CD4-positive, alpha-beta T cell (primary cell): ENCODE measurements at regions of chr14 and their contacts with region 1.

Region 1: GRCh38 chr14:55051426-55052268 is at the start of gene MAPK1IP1L:
- DNase-seq: peak; percentile 83 to 95 (median 90)
- ATAC-seq: peak; percentile 88
- H3K4me3 ChIP-seq: peak within 1 kb of the TSS; percentile 91
- H3K4me3 Mint-ChIP-seq: peak within 1 kb of the TSS; percentile 95
- H3K27ac ChIP-seq: peak within 1 kb of the TSS; percentile 98 to 99
- H3K27ac Mint-ChIP-seq: peak within 1 kb of the TSS; percentile 96
- H3K4me1 ChIP-seq: peaks cover 27% of the 10 kb centered on the region
- H3K4me1 Mint-ChIP-seq: peaks cover 49% of the 10 kb centered on the region
- H3K27me3 ChIP-seq: no peaks in the 10 kb centered on the region
- H3K27me3 Mint-ChIP-seq: no peaks in the 10 kb centered on the region
- CTCF ChIP-seq: peak; percentile 99
- total RNA-seq, gene MAPK1IP1L: 198 to 207 TPM

Region 2: DNA sequence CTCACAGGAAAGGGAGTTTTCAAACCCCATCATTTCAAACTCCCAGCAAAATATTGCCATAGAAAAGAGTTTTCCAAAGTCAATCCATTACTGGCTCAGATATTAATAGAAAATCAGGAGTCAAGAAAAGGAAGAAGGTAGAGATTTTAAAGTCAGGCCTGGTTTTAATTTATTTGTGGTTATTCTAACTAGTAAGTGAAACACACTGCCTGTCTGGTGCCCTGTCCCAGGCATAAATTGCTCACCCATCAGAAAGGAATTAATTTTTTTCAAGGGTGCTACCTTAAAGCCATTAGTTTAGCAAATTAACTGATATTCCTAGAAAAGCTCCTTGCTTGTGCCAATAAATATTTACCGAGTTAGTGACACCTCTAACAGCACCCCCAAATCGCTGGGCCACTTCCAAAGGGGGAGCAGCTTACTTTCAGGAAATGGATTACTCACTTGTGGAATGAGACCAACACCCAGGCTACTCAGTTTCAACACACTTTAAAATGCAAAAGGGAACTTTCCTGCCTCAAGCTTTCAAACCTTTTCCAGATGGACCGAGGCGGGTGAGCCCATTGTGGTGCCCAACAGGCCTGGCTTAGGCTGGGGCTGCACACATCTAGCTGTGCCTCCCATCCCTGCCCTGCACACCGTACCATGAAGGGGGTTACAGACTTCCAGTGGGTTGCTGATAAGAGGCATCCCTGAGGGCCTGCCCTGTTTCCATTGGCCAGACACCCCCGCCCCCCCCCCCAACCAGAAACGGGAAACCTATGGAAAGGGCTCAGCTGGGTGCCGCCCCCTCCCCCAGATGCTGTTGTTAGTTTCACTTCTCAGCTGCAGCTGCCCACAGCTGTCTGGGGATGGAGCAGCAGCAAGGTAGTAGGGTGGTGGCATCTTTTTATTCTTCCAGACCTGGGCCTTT is 367.5 kb before region 1 on chr14:
- CTCF ChIA-PET with region 1: no interaction called
- POLR2A ChIA-PET with region 1: no interaction called
- intact Hi-C with region 1: no loop called
- DNase-seq: no peak
- ATAC-seq: no peak
- H3K4me3 ChIP-seq: no peak overlapping the region
- H3K4me3 Mint-ChIP-seq: no peak overlapping the region
- H3K27ac ChIP-seq: no peak overlapping the region
- H3K27ac Mint-ChIP-seq: no peak overlapping the region
- H3K4me1 ChIP-seq: no peaks in the 10 kb centered on the region
- H3K4me1 Mint-ChIP-seq: no peaks in the 10 kb centered on the region
- H3K27me3 ChIP-seq: no peaks in the 10 kb centered on the region
- H3K27me3 Mint-ChIP-seq: no peaks in the 10 kb centered on the region
- CTCF ChIP-seq: no peak

Region 3: DNA sequence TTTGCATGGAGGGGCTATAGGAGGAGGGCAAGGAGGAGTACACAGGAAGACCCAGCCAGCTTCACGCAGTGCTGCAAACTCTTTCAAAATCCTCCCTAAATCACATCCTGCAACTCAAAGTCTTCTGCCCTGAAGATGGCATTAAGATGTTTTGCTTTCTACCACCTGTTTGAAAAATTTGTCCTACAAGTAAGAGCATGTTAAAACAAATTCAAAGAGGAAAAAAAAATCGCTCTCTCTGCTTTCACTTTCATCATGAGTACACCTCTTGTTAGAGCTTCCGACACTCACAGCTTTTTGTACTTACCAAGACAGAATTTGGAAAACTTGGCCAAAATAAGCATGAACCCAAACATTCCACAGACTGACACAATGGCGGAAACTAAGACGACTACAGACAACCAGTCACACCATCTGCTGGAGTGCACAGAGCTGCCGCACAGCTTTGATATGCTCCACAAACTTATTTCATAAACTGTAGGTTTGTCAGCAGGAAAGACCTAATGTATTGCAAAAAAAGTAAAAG is 170.3 kb before region 1 on chr14:
- CTCF ChIA-PET with region 1: interaction called, 3 read pairs
- POLR2A ChIA-PET with region 1: interaction called, 10 read pairs
- intact Hi-C with region 1: no loop called
- DNase-seq: peak in 7 of 14 experiments; percentile 11 to 77 (median 45)
- ATAC-seq: peak; percentile 73
- H3K4me3 ChIP-seq: peak overlapping the region; percentile 62
- H3K4me3 Mint-ChIP-seq: peak overlapping the region; percentile 95
- H3K27ac ChIP-seq: peak overlapping the region; percentile 61 to 74
- H3K27ac Mint-ChIP-seq: peak overlapping the region; percentile 88
- H3K4me1 ChIP-seq: peaks cover 30% of the 10 kb centered on the region
- H3K4me1 Mint-ChIP-seq: peaks cover 59% of the 10 kb centered on the region
- H3K27me3 ChIP-seq: no peaks in the 10 kb centered on the region
- H3K27me3 Mint-ChIP-seq: no peaks in the 10 kb centered on the region
- CTCF ChIP-seq: no peak

Region 4: DNA sequence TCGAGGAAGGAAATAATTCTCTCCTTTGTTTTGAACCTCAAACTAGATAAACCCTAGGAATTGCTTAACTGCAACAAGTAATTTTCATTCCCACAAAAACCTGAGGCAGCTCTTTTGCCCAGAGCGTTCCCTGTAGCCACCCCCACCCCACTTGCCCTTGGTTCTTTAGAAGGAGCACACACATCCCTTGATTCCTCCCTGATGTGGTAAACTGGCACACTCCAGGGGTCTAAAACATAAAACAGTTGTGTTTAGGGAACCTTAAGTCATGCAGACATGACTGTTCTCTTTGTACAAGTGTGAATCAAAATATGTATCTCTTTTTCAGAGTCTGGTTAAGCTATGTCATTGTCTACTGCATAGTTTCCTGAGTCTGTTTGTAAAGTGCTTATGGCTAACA is 13.8 kb after region 1 on chr14:
- CTCF ChIA-PET with region 1: interaction called, 24 read pairs
- POLR2A ChIA-PET with region 1: interaction called, 42 read pairs
- intact Hi-C with region 1: no loop called
- DNase-seq: no peak
- ATAC-seq: no peak
- H3K4me3 ChIP-seq: no peak overlapping the region
- H3K4me3 Mint-ChIP-seq: no peak overlapping the region
- H3K27ac ChIP-seq: no peak overlapping the region
- H3K27ac Mint-ChIP-seq: no peak overlapping the region
- H3K4me1 ChIP-seq: peaks cover 8% of the 10 kb centered on the region
- H3K4me1 Mint-ChIP-seq: peaks cover 23% of the 10 kb centered on the region
- H3K27me3 ChIP-seq: no peaks in the 10 kb centered on the region
- H3K27me3 Mint-ChIP-seq: no peaks in the 10 kb centered on the region
- CTCF ChIP-seq: no peak

Region 5: DNA sequence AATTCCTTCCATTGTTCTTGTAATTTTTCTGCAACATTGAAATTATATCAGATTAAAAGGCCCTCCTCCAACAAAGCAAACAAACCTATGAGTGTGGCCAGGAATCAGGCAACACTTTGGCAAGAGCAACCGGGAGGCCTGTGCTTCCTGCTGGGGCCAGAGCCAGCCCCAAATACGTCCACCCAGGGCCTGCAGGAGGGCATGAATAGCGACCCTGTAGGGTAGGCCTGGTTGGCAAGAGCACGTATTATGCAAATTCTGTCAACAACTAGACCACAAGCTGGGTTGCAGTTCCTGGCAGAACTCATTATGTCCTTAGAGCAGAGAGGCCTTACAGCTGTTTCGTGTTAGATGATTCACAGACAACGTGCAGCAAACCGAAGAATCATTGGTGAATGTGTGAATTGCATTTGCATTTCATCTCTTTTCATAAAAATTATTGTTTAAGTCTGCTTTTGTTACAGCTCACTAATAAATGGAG is 50.5 kb after region 1 on chr14:
- CTCF ChIA-PET with region 1: interaction called, 8 read pairs
- POLR2A ChIA-PET with region 1: interaction called, 12 read pairs
- intact Hi-C with region 1: no loop called
- DNase-seq: peak in 12 of 14 experiments; percentile 15 to 77 (median 39)
- ATAC-seq: peak; percentile 61
- H3K4me3 ChIP-seq: no peak overlapping the region
- H3K4me3 Mint-ChIP-seq: peak overlapping the region; percentile 59
- H3K27ac ChIP-seq: peak overlapping the region in 1 of 2 donors; percentile 83
- H3K27ac Mint-ChIP-seq: peak overlapping the region; percentile 94
- H3K4me1 ChIP-seq: peaks cover 70% of the 10 kb centered on the region
- H3K4me1 Mint-ChIP-seq: peaks cover 51% of the 10 kb centered on the region
- H3K27me3 ChIP-seq: no peaks in the 10 kb centered on the region
- H3K27me3 Mint-ChIP-seq: no peaks in the 10 kb centered on the region
- CTCF ChIP-seq: no peak

Region 6: GRCh38 chr14:55354500-55354899 is 302.9 kb after region 1 on chr14:
- CTCF ChIA-PET with region 1: interaction called, 6 read pairs
- POLR2A ChIA-PET with region 1: no interaction called
- intact Hi-C with region 1: loop called in 1 of 2 experiments (anchors 2 kb)
- DNase-seq: peak; percentile 48 to 89 (median 58)
- ATAC-seq: peak; percentile 90
- H3K4me3 ChIP-seq: peak overlapping the region; percentile 32
- H3K4me3 Mint-ChIP-seq: peak overlapping the region; percentile 57
- H3K27ac ChIP-seq: peak overlapping the region; percentile 43 to 67
- H3K27ac Mint-ChIP-seq: peak overlapping the region; percentile 91
- H3K4me1 ChIP-seq: peaks cover 17% of the 10 kb centered on the region
- H3K4me1 Mint-ChIP-seq: peaks cover 17% of the 10 kb centered on the region
- H3K27me3 ChIP-seq: no peaks in the 10 kb centered on the region
- H3K27me3 Mint-ChIP-seq: no peaks in the 10 kb centered on the region
- CTCF ChIP-seq: peak; percentile 73